ENCODE measurements at regions of chr11 and their contacts with region 1.

Region 1: GRCh38 chr11:102457865-102458264 is 5.3 kb upstream of the TMEM123 start:
- DNase-seq: no peak
- H3K4me3 Mint-ChIP-seq: no peak overlapping the region
- H3K27ac Mint-ChIP-seq: peak overlapping the region; percentile 85
- H3K4me1 Mint-ChIP-seq: peaks cover 74% of the 10 kb centered on the region
- H3K27me3 Mint-ChIP-seq: peaks cover 2% of the 10 kb centered on the region

Region 2: GRCh38 chr11:102469172-102469821 is 11.4 kb after region 1 on chr11:
- intact Hi-C with region 1: loop called (anchors 1 kb)
- DNase-seq: no peak
- H3K4me3 Mint-ChIP-seq: peak overlapping the region; percentile 1
- H3K27ac Mint-ChIP-seq: peak overlapping the region; percentile 4
- H3K4me1 Mint-ChIP-seq: peaks cover 93% of the 10 kb centered on the region
- H3K27me3 Mint-ChIP-seq: peaks cover 2% of the 10 kb centered on the region

Region 3: GRCh38 chr11:102476812-102477211 is 18.9 kb after region 1 on chr11:
- intact Hi-C with region 1: loop called (anchors 1 kb)
- DNase-seq: no peak
- H3K4me3 Mint-ChIP-seq: peak overlapping the region; percentile 40
- H3K27ac Mint-ChIP-seq: peak overlapping the region; percentile 88
- H3K4me1 Mint-ChIP-seq: peaks cover 64% of the 10 kb centered on the region
- H3K27me3 Mint-ChIP-seq: peaks cover 2% of the 10 kb centered on the region

Measured in activated T-helper 1 cell treated with anti-CD3 and anti-CD28 coated beads, Interleukin-12 subunit alpha, Interleukin-12 subunit beta, Interleukin-2, Interleukin-4 antibody, amounts not matched to agents 30 ng/mL and 10 ng/mL and 1 ng/mL, durations not matched to agents 14 hours and 24 hours and 36 hours (primary cell).